Panc1 (cell line): ENCODE measurements at regions of chr2 and their contacts with region 1.

Region 1: GRCh38 chr2:214378277-214379116 is 32.4 kb upstream of the VWC2L start:
- DNase-seq: no peak
- ATAC-seq: no peak
- H3K4me3 ChIP-seq: no peak overlapping the region
- H3K27ac ChIP-seq: no peak overlapping the region
- H3K4me1 ChIP-seq: no peaks in the 10 kb centered on the region
- H3K27me3 ChIP-seq: no peaks in the 10 kb centered on the region
- CTCF ChIP-seq: no peak; the same call in 1 of the 2 replicates

Region 2: DNA sequence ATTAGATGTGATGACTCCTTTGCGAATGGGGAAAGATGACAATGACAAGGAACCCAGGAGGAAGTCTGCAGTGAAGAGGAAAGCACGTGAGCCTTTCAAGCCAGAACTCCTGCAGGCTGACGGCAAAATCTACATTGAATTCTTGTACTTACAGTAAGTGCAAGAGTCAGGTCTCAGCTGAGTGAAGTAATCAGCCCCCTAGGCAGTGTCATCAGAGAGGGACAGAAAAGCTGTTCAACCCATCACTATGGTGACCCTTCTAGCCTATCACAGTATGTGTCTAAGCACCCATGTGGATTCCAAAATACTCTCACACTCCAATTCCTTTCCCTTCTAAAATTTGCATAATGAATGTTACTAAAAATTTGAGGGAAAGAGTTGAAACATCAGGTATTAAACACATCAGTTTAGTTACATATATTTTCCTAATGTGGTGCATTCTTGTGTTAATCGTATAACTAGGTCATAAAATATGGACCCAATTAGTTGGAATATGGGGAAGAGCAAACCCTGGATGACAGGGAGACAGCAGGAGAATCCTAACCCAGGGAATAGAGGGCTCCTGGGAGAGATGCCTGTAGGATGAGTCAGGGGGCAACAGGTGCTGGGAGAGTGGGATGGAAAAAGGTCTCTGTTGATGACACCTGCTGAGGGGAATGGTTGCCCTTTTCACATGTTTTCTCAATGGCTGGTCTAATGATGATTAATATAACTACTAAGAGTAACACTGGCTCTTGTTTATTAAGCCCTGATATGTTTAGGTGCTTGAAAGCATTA is 71.8 kb after region 1 on chr2:
- CTCF ChIA-PET with region 1: no interaction called
- POLR2A ChIA-PET with region 1: no interaction called
- in situ Hi-C with region 1: no loop called
- intact Hi-C with region 1: no loop called
- DNase-seq: no peak
- ATAC-seq: no peak
- H3K4me3 ChIP-seq: no peak overlapping the region
- H3K27ac ChIP-seq: no peak overlapping the region
- H3K4me1 ChIP-seq: no peaks in the 10 kb centered on the region
- H3K27me3 ChIP-seq: no peaks in the 10 kb centered on the region
- CTCF ChIP-seq: no peak

Region 3: GRCh38 chr2:214550786-214551185 is 172.3 kb after region 1 on chr2:
- CTCF ChIA-PET with region 1: no interaction called
- POLR2A ChIA-PET with region 1: no interaction called
- in situ Hi-C with region 1: no loop called
- intact Hi-C with region 1: no loop called
- DNase-seq: no peak
- ATAC-seq: no peak
- H3K4me3 ChIP-seq: no peak overlapping the region
- H3K27ac ChIP-seq: no peak overlapping the region
- H3K4me1 ChIP-seq: no peaks in the 10 kb centered on the region
- H3K27me3 ChIP-seq: no peaks in the 10 kb centered on the region
- CTCF ChIP-seq: no peak

Region 4: GRCh38 chr2:214874676-214875075 is 496.2 kb after region 1 on chr2:
- CTCF ChIA-PET with region 1: no interaction called
- POLR2A ChIA-PET with region 1: no interaction called
- in situ Hi-C with region 1: no loop called
- intact Hi-C with region 1: loop called (anchors 5 kb)
- DNase-seq: no peak
- ATAC-seq: no peak
- H3K4me3 ChIP-seq: no peak overlapping the region
- H3K27ac ChIP-seq: no peak overlapping the region
- H3K4me1 ChIP-seq: no peaks in the 10 kb centered on the region
- H3K27me3 ChIP-seq: no peaks in the 10 kb centered on the region
- CTCF ChIP-seq: no peak